ENCODE measurements at regions of chr13 and their contacts with region 1.

Region 1: DNA sequence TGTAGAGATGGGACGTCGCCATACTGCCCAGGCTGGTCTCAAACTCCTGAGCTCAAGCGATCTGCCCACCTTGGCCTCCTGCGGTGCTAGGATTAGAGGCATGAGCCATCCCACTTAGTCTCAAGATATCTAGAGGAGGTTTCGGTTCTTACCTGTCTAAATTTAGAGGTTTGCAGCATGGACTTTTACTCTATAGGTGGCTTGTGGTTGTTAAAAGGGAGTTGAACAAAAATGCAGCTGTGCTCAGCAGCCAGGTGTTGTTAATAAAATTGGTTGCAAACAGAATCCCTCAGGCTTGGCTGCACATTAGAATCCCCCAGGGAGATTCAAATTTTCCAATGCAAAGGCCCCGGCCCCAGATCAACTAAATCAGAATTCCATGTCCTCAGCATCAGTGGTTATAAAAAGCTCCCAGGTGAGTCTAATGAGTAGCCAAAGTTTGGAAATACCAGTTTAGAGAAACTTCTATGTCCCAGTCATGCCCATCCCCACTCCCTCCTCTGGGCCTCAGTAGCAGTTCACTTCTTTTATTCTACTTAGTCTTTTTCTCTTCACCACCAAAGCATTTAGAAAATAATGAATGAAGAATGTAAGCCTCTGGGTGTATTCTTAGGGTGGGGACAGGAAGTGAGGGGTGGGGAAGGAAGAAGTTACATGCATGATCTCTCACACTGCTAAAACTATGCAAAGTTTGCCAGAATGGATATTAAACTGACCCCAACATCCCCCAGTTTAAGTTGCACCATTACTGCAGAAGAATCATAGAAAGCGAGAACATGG is 471.0 kb downstream of the COG6 start:
- DNase-seq: peak; percentile 50
- ATAC-seq: peak; percentile 32
- H3K4me3 ChIP-seq: peak overlapping the region in 3 of 5 experiments; percentile 16 to 53 (median 18)
- H3K4me3 Mint-ChIP-seq: peak overlapping the region; percentile 59
- H3K27ac ChIP-seq: peak overlapping the region; percentile 52 to 69
- H3K27ac Mint-ChIP-seq: peak overlapping the region; percentile 51
- H3K4me1 ChIP-seq: peaks cover 46 to 47% of the 10 kb centered on the region in 2 donors
- H3K4me1 Mint-ChIP-seq: peaks cover 51% of the 10 kb centered on the region
- H3K27me3 ChIP-seq: no peaks in the 10 kb centered on the region
- H3K27me3 Mint-ChIP-seq: no peaks in the 10 kb centered on the region
- CTCF ChIP-seq: no peak

Region 2: DNA sequence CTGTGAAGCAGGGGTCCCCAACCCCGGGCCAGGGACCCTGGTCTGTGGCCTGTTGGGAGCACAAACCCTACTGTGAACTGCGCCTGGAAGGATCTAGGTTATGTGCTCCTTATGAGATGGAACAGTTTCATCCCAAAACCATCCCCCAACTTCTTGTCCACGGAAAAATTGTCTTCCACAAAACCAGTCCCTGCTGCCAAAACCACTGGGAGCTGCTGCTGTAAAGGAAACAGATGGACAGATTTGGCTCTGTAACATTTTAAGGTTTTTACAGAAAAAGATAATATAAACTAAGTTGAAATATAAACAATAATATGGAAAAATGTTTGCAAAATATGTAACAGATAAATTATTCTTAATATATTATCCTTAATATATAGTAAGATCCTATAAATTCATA is 397.3 kb before region 1 on chr13:
- CTCF ChIA-PET with region 1: no interaction called
- POLR2A ChIA-PET with region 1: no interaction called
- intact Hi-C with region 1: no loop called
- DNase-seq: no peak
- ATAC-seq: no peak
- H3K4me3 ChIP-seq: no peak overlapping the region
- H3K4me3 Mint-ChIP-seq: no peak overlapping the region
- H3K27ac ChIP-seq: no peak overlapping the region
- H3K27ac Mint-ChIP-seq: no peak overlapping the region
- H3K4me1 ChIP-seq: no peaks in the 10 kb centered on the region
- H3K4me1 Mint-ChIP-seq: no peaks in the 10 kb centered on the region
- H3K27me3 ChIP-seq: no peaks in the 10 kb centered on the region
- H3K27me3 Mint-ChIP-seq: no peaks in the 10 kb centered on the region
- CTCF ChIP-seq: no peak

Region 3: DNA sequence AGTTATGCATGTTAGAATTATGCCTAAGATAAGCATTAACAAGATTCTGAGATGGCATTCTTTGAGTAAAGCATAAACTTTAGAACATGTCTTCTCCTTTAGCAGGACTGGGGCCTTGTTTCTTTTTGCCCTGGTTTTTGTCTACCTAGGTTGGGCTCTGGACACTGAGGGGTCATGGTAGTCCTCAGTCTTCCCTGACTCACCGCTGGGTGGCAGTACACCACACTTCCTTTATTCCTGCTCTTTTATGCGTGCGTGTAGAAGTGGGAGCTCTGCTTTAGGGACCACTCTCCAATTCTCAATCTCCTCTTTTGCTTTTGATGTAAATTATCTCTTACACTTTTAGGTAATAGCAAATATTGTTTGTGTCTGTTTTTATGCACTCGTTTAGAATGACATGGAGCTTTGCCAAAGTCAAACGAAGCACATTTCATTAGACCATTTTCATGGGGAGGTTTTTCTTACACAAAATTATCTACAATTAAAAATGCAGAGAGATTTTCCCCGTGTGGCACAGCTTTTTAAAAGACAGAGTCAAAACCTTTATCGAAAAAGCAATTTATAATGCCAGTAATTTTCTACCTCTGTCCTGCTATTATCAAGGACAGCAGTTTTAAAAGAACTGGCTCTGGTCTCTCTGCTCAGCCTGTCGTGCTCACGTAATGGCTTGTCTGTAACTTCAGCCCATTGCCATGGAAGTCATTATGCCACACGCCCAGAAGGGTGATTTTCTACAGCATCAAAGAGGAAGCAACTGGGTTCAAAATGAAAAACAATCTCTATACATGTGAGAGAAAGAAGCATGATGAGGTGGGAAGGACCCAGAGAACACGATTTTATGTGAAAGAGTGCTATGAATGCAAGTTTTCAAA is 57.1 kb before region 1 on chr13:
- CTCF ChIA-PET with region 1: interaction called, 4 read pairs
- POLR2A ChIA-PET with region 1: no interaction called
- intact Hi-C with region 1: loop called (anchors 1 kb)
- DNase-seq: peak; percentile 79
- ATAC-seq: peak; percentile 95
- H3K4me3 ChIP-seq: no peak overlapping the region
- H3K4me3 Mint-ChIP-seq: no peak overlapping the region
- H3K27ac ChIP-seq: no peak overlapping the region
- H3K27ac Mint-ChIP-seq: no peak overlapping the region
- H3K4me1 ChIP-seq: peaks cover 10 to 13% of the 10 kb centered on the region in 2 donors
- H3K4me1 Mint-ChIP-seq: peaks cover 11% of the 10 kb centered on the region
- H3K27me3 ChIP-seq: no peaks in the 10 kb centered on the region
- H3K27me3 Mint-ChIP-seq: no peaks in the 10 kb centered on the region
- CTCF ChIP-seq: peak; percentile 82

Region 4: DNA sequence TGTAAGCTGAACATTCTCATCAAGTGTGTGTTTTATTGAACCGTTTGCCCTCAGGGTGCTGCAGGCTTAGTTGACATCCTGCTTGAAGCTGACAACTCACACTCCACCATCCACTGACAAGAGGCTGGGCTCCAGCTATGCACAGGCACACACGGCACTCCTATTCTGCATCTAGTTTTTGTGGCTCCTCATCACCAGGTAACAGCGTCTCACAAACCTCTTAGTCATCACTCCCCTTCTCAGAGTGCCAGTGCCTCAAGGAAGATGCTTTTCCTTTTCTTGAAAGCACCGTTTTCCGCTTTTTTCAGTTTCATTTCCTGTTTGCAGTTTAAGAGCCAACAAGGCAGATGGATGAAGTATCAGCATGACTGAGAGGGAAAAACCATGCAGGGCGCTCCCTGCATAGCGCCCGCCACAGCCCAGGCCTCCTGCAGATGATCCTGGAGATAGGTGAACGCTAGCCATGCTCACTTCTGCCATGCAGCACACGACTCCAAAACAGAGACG is 20.2 kb after region 1 on chr13:
- CTCF ChIA-PET with region 1: interaction called, 4 read pairs
- POLR2A ChIA-PET with region 1: interaction called, 3 read pairs
- intact Hi-C with region 1: loop called (anchors 2 kb)
- DNase-seq: peak; percentile 36
- ATAC-seq: peak; percentile 47
- H3K4me3 ChIP-seq: no peak overlapping the region
- H3K4me3 Mint-ChIP-seq: no peak overlapping the region
- H3K27ac ChIP-seq: no peak overlapping the region
- H3K27ac Mint-ChIP-seq: no peak overlapping the region
- H3K4me1 ChIP-seq: peaks cover 20 to 27% of the 10 kb centered on the region in 2 donors
- H3K4me1 Mint-ChIP-seq: peaks cover 35% of the 10 kb centered on the region
- H3K27me3 ChIP-seq: no peaks in the 10 kb centered on the region
- H3K27me3 Mint-ChIP-seq: peaks cover 4% of the 10 kb centered on the region
- CTCF ChIP-seq: no peak

Region 5: GRCh38 chr13:40433577-40433976 is 307.1 kb after region 1 on chr13:
- CTCF ChIA-PET with region 1: interaction called, 3 read pairs
- POLR2A ChIA-PET with region 1: no interaction called
- intact Hi-C with region 1: loop called (anchors 5 kb)
- DNase-seq: peak; percentile 71
- ATAC-seq: peak; percentile 64
- H3K4me3 ChIP-seq: no peak overlapping the region
- H3K4me3 Mint-ChIP-seq: peak overlapping the region; percentile 53
- H3K27ac ChIP-seq: peak overlapping the region; percentile 71 to 81
- H3K27ac Mint-ChIP-seq: peak overlapping the region; percentile 85
- H3K4me1 ChIP-seq: peaks cover 88 to 90% of the 10 kb centered on the region in 2 donors
- H3K4me1 Mint-ChIP-seq: peaks cover 86% of the 10 kb centered on the region
- H3K27me3 ChIP-seq: no peaks in the 10 kb centered on the region
- H3K27me3 Mint-ChIP-seq: no peaks in the 10 kb centered on the region
- CTCF ChIP-seq: no peak

Region 6: GRCh38 chr13:40682449-40683240 is 556.1 kb after region 1 on chr13:
- CTCF ChIA-PET with region 1: interaction called, 3 read pairs
- POLR2A ChIA-PET with region 1: no interaction called
- intact Hi-C with region 1: loop called (anchors 5 kb)
- DNase-seq: peak; percentile 55
- ATAC-seq: peak; percentile 45
- H3K4me3 ChIP-seq: no peak overlapping the region
- H3K4me3 Mint-ChIP-seq: peak overlapping the region; percentile 23
- H3K27ac ChIP-seq: no peak overlapping the region
- H3K27ac Mint-ChIP-seq: no peak overlapping the region
- H3K4me1 ChIP-seq: peaks cover 19 to 22% of the 10 kb centered on the region in 2 donors
- H3K4me1 Mint-ChIP-seq: peaks cover 19% of the 10 kb centered on the region
- H3K27me3 ChIP-seq: no peaks in the 10 kb centered on the region
- H3K27me3 Mint-ChIP-seq: no peaks in the 10 kb centered on the region
- CTCF ChIP-seq: peak; percentile 91